Sigmoid colon (tissue), 7 donors: ENCODE measurements at regions of chr16 and their contacts with region 1.

Region 1: GRCh38 chr16:24568392-24568791 is 29.0 kb downstream of the RBBP6 start:
- DNase-seq: no peak
- H3K4me3 ChIP-seq: no peak overlapping the region
- H3K27ac ChIP-seq: no peak overlapping the region
- H3K4me1 ChIP-seq: no peaks in the 10 kb centered on the region
- H3K27me3 ChIP-seq: no peaks in the 10 kb centered on the region
- CTCF ChIP-seq: peak in 1 of 4 experiments; percentile 25
- EP300 ChIP-seq: no peak
- POLR2A ChIP-seq: no peak

Region 2: GRCh38 chr16:24939234-24939633 is 370.8 kb after region 1 on chr16:
- intact Hi-C with region 1: loop called (anchors 5 kb)
- DNase-seq: no peak
- H3K4me3 ChIP-seq: no peak overlapping the region
- H3K27ac ChIP-seq: no peak overlapping the region
- H3K4me1 ChIP-seq: peaks cover 0 to 9% (median 2%) of the 10 kb centered on the region in 4 donors
- H3K27me3 ChIP-seq: no peaks in the 10 kb centered on the region
- CTCF ChIP-seq: no peak
- EP300 ChIP-seq: no peak
- POLR2A ChIP-seq: no peak